Activated naive CD8-positive, alpha-beta T cell treated with anti-CD3 and anti-CD28 coated beads, Interleukin-2, amount 10 ng/mL, durations not matched to agents 7 days and 5 days (primary cell): ENCODE measurements at regions of chr12 and their contacts with region 1.

Region 1: DNA sequence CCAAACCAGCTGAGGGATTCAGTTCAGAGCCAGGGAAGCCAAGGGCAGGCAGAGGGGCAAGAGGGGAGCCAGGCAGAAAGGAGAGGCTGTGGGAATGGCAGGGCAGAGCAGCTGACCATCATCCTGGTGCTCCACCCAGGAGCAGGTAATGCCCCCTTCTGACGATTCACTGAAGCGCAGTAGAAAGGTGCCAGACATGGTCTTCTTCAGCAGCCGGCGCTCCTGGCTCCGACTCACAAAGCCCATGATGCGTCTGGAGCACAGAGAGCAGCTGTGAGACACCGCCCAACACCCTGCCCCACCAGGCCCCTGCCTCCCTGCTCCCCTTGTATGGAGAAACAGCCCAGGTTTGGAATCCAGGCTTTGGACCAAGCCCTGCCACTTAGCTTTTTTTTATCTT is 8.0 kb downstream of the IL23A start:
- DNase-seq: no peak
- ATAC-seq: peak; percentile 12
- H3K4me3 Mint-ChIP-seq: no peak overlapping the region
- H3K27ac Mint-ChIP-seq: peak overlapping the region; percentile 20
- H3K4me1 Mint-ChIP-seq: peaks cover 8% of the 10 kb centered on the region
- H3K27me3 Mint-ChIP-seq: no peaks in the 10 kb centered on the region

Region 2: DNA sequence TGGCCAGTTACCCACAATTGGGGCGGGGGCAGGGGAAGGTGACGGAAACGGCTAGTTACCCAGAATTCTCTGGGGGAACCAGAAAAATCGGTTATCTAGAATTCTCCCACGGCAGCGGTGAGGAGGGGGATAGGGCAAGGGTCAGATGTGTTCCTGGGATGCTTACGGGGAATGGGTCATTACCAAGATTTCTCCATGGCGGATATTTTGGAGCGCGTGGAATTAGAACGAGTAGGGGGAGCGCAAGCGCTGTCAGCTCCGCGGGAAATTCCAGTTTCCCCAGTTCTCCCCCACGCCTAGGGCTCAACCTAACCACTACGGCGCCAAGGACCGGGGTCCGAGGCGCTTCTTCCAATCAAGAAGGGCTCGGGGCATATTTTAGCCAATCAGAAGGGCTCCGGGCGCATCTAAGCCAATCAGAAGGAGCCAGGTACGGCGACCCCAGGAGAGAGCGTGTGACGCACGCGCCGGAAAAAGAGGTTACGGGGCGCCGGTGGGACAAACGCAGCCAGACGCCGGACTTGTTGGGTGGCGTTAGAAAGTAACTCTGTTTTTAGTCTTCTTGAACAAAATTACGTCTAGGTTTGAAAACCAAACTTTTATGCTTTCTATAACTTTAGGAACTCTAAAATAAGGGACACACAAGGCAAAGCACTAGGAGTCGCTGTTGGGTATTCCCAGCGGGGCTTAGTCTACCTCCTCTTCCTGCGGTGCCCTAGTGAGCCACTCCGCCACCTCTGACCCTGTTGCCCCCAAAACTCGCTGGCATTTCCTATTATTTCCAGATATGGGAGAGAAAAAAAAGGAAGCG is 12.8 kb before region 1 on chr12 and contains the start of gene PAN2:
- POLR2A ChIA-PET with region 1: interaction called, 25 read pairs
- DNase-seq: peak; percentile 89
- ATAC-seq: peak; percentile 91
- H3K4me3 Mint-ChIP-seq: peak within 1 kb of the TSS; percentile 92
- H3K27ac Mint-ChIP-seq: peak within 1 kb of the TSS; percentile 94
- H3K4me1 Mint-ChIP-seq: peaks cover 32% of the 10 kb centered on the region
- H3K27me3 Mint-ChIP-seq: no peaks in the 10 kb centered on the region
- total RNA-seq, gene PAN2: 106 to 115 TPM